Posterior vena cava (tissue), 2 donors: ENCODE measurements at regions of chr11 and their contacts with region 1.

Region 1: GRCh38 chr11:62847767-62848314 is 8.5 kb upstream of the WDR74 start:
- DNase-seq: peak; percentile 18

Region 2: GRCh38 chr11:63017306-63017974 is 169.6 kb after region 1 on chr11:
- intact Hi-C with region 1: no loop called
- DNase-seq: no peak

Region 3: GRCh38 chr11:63906585-63906984 is 1058.7 kb after region 1 on chr11:
- intact Hi-C with region 1: no loop called
- DNase-seq: no peak

Region 4: GRCh38 chr11:64088162-64089026 is 1240.6 kb after region 1 on chr11:
- intact Hi-C with region 1: loop called in 1 of 2 experiments (anchors 5 kb)
- DNase-seq: no peak